ENCODE measurements at regions of chr22 and their contacts with region 1.

Region 1: GRCh38 chr22:45268958-45269844 is 15.5 kb upstream of the UPK3A start:
- DNase-seq: peak; percentile 89
- CTCF ChIP-seq: peak; percentile 97

Region 2: GRCh38 chr22:45201678-45202332 is 67.4 kb before region 1 on chr22:
- CTCF ChIA-PET with region 1: no interaction called
- POLR2A ChIA-PET with region 1: no interaction called
- DNase-seq: no peak
- CTCF ChIP-seq: no peak

Region 3: DNA sequence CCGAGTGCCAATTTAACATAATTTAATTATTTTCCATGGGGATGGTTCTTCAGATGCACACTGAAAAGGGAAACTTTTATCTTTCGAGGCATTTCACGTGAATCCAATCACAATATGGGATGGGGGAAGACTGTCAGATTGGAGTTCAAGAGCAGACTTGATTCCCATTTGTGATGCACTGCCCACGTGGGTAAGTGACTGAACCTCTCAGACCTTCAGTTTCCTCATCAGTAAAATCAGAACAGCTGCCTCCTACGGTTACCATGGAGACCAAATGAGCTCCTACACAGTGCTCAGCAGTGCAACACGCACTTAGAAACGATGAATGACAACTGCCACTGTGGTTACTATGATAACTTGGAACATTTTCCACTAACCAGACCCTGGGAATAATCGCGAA is 50.2 kb before region 1 on chr22:
- CTCF ChIA-PET with region 1: no interaction called
- POLR2A ChIA-PET with region 1: no interaction called
- DNase-seq: peak; percentile 80
- CTCF ChIP-seq: no peak

Region 4: GRCh38 chr22:45308391-45309186 is 39.4 kb after region 1 on chr22:
- CTCF ChIA-PET with region 1: no interaction called
- POLR2A ChIA-PET with region 1: no interaction called
- DNase-seq: no peak
- CTCF ChIP-seq: no peak

Region 5: GRCh38 chr22:45435544-45436139 is 166.4 kb after region 1 on chr22:
- CTCF ChIA-PET with region 1: interaction called, 11 read pairs
- POLR2A ChIA-PET with region 1: no interaction called
- DNase-seq: peak; percentile 86
- CTCF ChIP-seq: peak; percentile 99

Measured in GM10248 (cell line).